ENCODE measurements at regions of chr11 and their contacts with region 1.

Region 1: GRCh38 chr11:86068951-86069407 is at the start of gene PICALM:
- DNase-seq: peak; percentile 98 to 99
- ATAC-seq: peak; percentile 90 to 96 (median 92)
- H3K4me3 ChIP-seq: peak within 1 kb of the TSS; percentile 96
- H3K27ac ChIP-seq: peak within 1 kb of the TSS; percentile 98
- H3K4me1 ChIP-seq: peaks cover 28% of the 10 kb centered on the region
- H3K27me3 ChIP-seq: no peaks in the 10 kb centered on the region
- CTCF ChIP-seq: no peak
- total RNA-seq, gene PICALM: 79.8 to 123 (median 115) TPM

Region 2: GRCh38 chr11:86014221-86014620 is 54.8 kb before region 1 on chr11:
- intact Hi-C with region 1: loop called in 1 of 2 experiments (anchors 10 kb)
- DNase-seq: no peak
- ATAC-seq: no peak
- H3K4me3 ChIP-seq: no peak overlapping the region
- H3K27ac ChIP-seq: no peak overlapping the region
- H3K4me1 ChIP-seq: peaks cover 21% of the 10 kb centered on the region
- H3K27me3 ChIP-seq: no peaks in the 10 kb centered on the region
- CTCF ChIP-seq: no peak

Region 3: DNA sequence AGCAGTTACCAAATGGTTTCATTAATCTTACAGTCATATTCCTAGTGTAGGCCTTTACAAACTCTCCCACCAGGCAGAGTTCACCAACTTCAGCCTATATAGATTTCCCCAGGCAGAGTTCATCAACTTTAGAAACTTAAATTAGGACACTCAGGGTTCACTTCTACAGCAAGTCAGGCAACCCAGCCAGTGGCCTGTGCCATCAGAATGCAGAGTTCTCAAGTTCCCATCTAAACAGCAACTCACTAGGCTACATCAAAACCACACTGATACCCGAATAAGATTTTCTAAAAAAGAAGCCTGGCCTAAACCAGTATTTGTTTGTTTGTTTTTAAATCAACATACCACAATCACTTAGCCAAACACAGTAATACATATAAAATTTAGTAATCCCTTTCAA is 33.8 kb before region 1 on chr11:
- intact Hi-C with region 1: loop called in 1 of 2 experiments (anchors 5 kb)
- DNase-seq: peak in 1 of 2 donors; percentile 57
- ATAC-seq: peak; percentile 65 to 73 (median 69)
- H3K4me3 ChIP-seq: peak overlapping the region; percentile 18
- H3K27ac ChIP-seq: peak overlapping the region; percentile 76
- H3K4me1 ChIP-seq: peaks cover 66% of the 10 kb centered on the region
- H3K27me3 ChIP-seq: no peaks in the 10 kb centered on the region
- CTCF ChIP-seq: no peak

Region 4: GRCh38 chr11:86174101-86175046 is 105.4 kb after region 1 on chr11:
- intact Hi-C with region 1: loop called (anchors 1 to 5 kb)
- DNase-seq: peak; percentile 86 to 93
- ATAC-seq: peak; percentile 98 to 99 (median 98)
- H3K4me3 ChIP-seq: peak overlapping the region; percentile 10
- H3K27ac ChIP-seq: peak overlapping the region; percentile 97
- H3K4me1 ChIP-seq: peaks cover 28% of the 10 kb centered on the region
- H3K27me3 ChIP-seq: no peaks in the 10 kb centered on the region
- CTCF ChIP-seq: no peak

Region 5: GRCh38 chr11:86193297-86194095 is 124.5 kb after region 1 on chr11:
- intact Hi-C with region 1: loop called in 1 of 2 experiments (anchors 5 kb)
- DNase-seq: peak; percentile 50 to 73
- ATAC-seq: peak; percentile 98 to 100 (median 99)
- H3K4me3 ChIP-seq: peak overlapping the region; percentile 48
- H3K27ac ChIP-seq: peak overlapping the region; percentile 21
- H3K4me1 ChIP-seq: peaks cover 16% of the 10 kb centered on the region
- H3K27me3 ChIP-seq: no peaks in the 10 kb centered on the region
- CTCF ChIP-seq: peak; percentile 83

Measured in psoas muscle (tissue), 8 donors.